ENCODE measurements at regions of chr12 and their contacts with region 1.

Region 1: DNA sequence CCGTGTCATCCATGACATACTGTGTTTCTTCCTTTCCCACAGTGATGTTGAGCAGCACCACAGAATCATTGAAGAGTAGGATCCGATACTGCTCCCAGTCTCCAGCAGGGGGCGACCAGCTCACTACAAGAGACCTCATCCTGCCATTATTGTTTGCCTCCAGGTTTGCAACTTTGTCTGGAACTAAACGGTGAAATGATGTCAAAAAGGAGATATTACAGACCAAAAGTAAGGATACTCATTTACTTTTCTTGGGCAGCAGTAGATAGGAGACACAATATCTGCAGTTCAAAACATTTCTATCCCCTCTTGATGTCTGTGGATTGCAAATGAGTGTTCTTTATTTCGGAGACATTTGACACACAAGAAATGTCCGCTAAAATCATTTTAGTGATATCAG is 47.2 kb downstream of the PTPRB start:
- DNase-seq: peak; percentile 80
- H3K4me3 ChIP-seq: no peak overlapping the region
- H3K27ac ChIP-seq: peak overlapping the region in 1 of 8 donors; percentile 33
- H3K4me1 ChIP-seq: peaks cover 0 to 7% (median 0%) of the 10 kb centered on the region in 6 donors
- H3K27me3 ChIP-seq: no peaks in the 10 kb centered on the region
- CTCF ChIP-seq: peak in 10 of 11 experiments; percentile 47 to 83 (median 74)
- POLR2A ChIP-seq: no peak

Region 2: DNA sequence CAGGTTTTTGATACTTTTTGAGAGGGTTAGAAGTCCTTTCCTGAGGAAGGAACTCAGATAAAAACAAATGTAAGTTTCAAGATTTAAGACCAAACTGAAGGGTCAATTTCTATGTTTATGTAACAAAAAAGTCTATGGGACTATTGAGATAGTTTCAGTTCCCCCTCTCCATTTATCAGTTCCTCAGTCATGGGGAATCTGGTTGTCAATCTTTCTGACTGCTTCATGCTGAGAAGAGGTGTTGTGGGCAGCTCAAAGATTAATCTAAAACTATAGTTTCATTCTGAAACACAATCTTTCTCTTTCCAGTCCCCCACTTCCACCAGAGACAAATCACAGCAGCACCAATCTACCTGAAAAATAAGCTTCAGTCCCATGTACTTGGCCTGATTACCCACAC is 130.3 kb before region 1 on chr12:
- intact Hi-C with region 1: no loop called
- DNase-seq: no peak
- H3K4me3 ChIP-seq: no peak overlapping the region
- H3K27ac ChIP-seq: no peak overlapping the region
- H3K4me1 ChIP-seq: no peaks in the 10 kb centered on the region
- H3K27me3 ChIP-seq: peaks cover 0 to 11% (median 0%) of the 10 kb centered on the region in 7 donors
- CTCF ChIP-seq: no peak
- POLR2A ChIP-seq: no peak

Region 3: GRCh38 chr12:70719672-70720420 is 129.8 kb after region 1 on chr12:
- intact Hi-C with region 1: loop called (anchors 5 kb)
- DNase-seq: peak; percentile 79
- H3K4me3 ChIP-seq: peak overlapping the region in 3 of 8 donors; percentile 10 to 46 (median 10)
- H3K27ac ChIP-seq: peak overlapping the region in 7 of 8 donors; percentile 53 to 79 (median 74)
- H3K4me1 ChIP-seq: peaks cover 0 to 49% (median 18%) of the 10 kb centered on the region in 6 donors
- H3K27me3 ChIP-seq: peaks cover 0 to 7% (median 0%) of the 10 kb centered on the region in 7 donors
- CTCF ChIP-seq: peak; percentile 31 to 81 (median 75)
- POLR2A ChIP-seq: no peak

Measured in spleen (tissue), 13 donors.